Activated T-helper 2 cell treated with anti-CD3 and anti-CD28 coated beads, Interferon-gamma antibody, Interleukin-2, Interleukin-4, amounts not matched to agents 10 μg/mL and 5 μg/mL and 100 μg/mL, durations not matched to agents 14 hours and 24 hours and 36 hours (primary cell): ENCODE measurements at regions of chr16 and their contacts with region 1.

Region 1: GRCh38 chr16:79269211-79269863 is 331.2 kb downstream of the MAF start:
- DNase-seq: peak; percentile 68
- H3K4me3 Mint-ChIP-seq: peak overlapping the region; percentile 38
- H3K27ac Mint-ChIP-seq: peak overlapping the region; percentile 87
- H3K4me1 Mint-ChIP-seq: peaks cover 89% of the 10 kb centered on the region
- H3K27me3 Mint-ChIP-seq: no peaks in the 10 kb centered on the region

Region 2: GRCh38 chr16:78892951-78893733 is 376.2 kb before region 1 on chr16:
- intact Hi-C with region 1: loop called (anchors 5 kb)
- DNase-seq: no peak
- H3K4me3 Mint-ChIP-seq: no peak overlapping the region
- H3K27ac Mint-ChIP-seq: peak overlapping the region; percentile 34
- H3K4me1 Mint-ChIP-seq: peaks cover 27% of the 10 kb centered on the region
- H3K27me3 Mint-ChIP-seq: no peaks in the 10 kb centered on the region

Region 3: DNA sequence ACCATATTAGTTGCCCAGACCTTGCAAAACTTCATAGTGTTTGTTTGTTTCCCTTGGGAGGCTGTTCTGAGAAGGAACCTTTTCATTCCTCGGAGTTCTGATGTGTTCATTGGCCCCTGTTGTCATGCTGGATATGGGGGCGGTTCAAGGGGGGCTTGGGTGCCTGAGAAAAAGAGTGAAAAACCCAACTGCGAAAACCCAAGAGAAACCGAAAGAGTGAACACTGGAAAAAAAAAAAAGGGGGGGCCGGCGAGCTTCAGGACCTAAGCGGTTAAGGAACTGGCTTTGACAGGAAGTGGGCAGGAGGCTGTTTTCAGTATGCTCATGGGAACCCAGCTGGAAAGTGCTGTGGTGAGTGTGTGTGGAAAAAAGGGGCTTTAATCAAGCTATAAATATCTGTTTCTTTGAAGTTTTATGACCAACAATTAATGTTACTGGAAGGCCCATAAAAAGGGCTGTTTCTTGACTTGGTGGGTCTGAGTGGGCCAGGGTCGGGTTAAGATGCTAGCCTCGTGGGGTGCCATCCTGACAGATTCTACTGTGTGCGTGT is 179.5 kb before region 1 on chr16:
- intact Hi-C with region 1: loop called (anchors 1 kb)
- DNase-seq: peak; percentile 69
- H3K4me3 Mint-ChIP-seq: peak overlapping the region; percentile 51
- H3K27ac Mint-ChIP-seq: peak overlapping the region; percentile 89
- H3K4me1 Mint-ChIP-seq: peaks cover 53% of the 10 kb centered on the region
- H3K27me3 Mint-ChIP-seq: no peaks in the 10 kb centered on the region

Region 4: GRCh38 chr16:79217375-79218011 is 51.8 kb before region 1 on chr16:
- intact Hi-C with region 1: loop called (anchors 1 kb)
- DNase-seq: peak; percentile 34
- H3K4me3 Mint-ChIP-seq: no peak overlapping the region
- H3K27ac Mint-ChIP-seq: peak overlapping the region; percentile 13
- H3K4me1 Mint-ChIP-seq: peaks cover 32% of the 10 kb centered on the region
- H3K27me3 Mint-ChIP-seq: no peaks in the 10 kb centered on the region

Region 5: DNA sequence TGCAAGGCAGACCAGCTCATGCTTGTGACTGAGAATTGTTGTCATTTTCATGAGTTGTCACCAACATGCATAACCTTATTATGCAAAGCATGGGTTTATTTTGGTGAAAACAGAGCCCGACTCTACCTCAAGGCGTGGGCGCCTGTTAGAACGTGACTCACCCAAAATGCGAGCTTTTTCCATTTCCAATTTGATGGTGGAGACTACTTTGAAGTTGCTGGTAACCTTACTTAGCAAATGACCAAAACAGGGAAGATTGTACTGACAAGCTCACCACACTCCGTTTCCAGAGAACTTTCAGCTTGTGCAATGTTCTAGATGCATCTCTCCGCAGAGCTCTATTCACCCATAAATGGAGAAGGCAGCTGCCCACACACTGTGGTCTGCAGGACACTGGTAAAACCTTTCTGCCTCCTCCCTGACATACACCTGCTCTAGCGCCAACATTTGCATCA is 46.7 kb after region 1 on chr16:
- intact Hi-C with region 1: loop called (anchors 1 kb)
- DNase-seq: peak; percentile 56
- H3K4me3 Mint-ChIP-seq: peak overlapping the region; percentile 42
- H3K27ac Mint-ChIP-seq: peak overlapping the region; percentile 89
- H3K4me1 Mint-ChIP-seq: peaks cover 44% of the 10 kb centered on the region
- H3K27me3 Mint-ChIP-seq: no peaks in the 10 kb centered on the region

Region 6: DNA sequence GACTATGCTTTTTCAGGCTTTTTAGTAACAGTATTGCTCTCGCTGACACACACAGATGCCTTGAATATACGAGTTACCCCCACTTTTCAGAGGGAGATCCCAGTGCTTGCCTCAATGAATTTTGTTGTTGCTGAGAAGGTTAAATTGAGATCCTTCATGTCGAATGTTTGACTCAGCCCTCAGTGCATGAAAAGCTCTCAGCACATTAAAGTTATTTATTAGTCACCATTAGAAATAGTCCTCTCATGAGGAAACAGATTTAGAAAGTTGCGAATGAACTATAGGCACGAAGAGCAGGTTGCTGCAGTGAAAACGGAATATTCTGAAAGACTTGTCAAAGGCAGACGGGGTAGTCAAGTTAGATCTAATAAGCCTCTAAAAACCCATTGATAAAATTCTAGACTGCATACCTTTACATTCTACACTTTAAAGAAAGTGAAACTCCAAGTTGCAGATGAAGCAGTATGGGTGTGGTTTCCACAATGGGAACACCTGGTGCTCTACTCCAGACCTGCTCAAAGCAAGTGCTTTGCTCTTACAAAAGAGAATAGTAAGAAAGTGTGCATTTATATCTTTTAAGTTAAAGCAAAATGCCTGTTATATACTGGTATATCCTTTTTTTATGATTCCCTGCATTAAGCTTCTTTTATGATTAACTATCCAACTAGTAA is 93.1 kb after region 1 on chr16:
- intact Hi-C with region 1: no loop called
- DNase-seq: no peak
- H3K4me3 Mint-ChIP-seq: no peak overlapping the region
- H3K27ac Mint-ChIP-seq: no peak overlapping the region
- H3K4me1 Mint-ChIP-seq: peaks cover 20% of the 10 kb centered on the region
- H3K27me3 Mint-ChIP-seq: peaks cover 3% of the 10 kb centered on the region